Activated CD4-positive, alpha-beta memory T cell treated with anti-CD3 and anti-CD28 coated beads for 36 hours (primary cell): ENCODE measurements at regions of chr12 and their contacts with region 1.

Region 1: GRCh38 chr12:104286538-104287482 is 16.7 kb upstream of the EID3 start:
- DNase-seq: peak; percentile 94
- H3K4me3 Mint-ChIP-seq: peak overlapping the region; percentile 98
- H3K27ac Mint-ChIP-seq: peak overlapping the region; percentile 99
- H3K4me1 Mint-ChIP-seq: peaks cover 16% of the 10 kb centered on the region
- H3K27me3 Mint-ChIP-seq: no peaks in the 10 kb centered on the region

Region 2: GRCh38 chr12:103930034-103930786 is 356.6 kb before region 1 on chr12 and contains the start of gene HSP90B1:
- CTCF ChIA-PET with region 1: no interaction called
- POLR2A ChIA-PET with region 1: interaction called, 6 read pairs
- intact Hi-C with region 1: loop called (anchors 1 kb)
- DNase-seq: peak; percentile 100
- H3K4me3 Mint-ChIP-seq: peak within 1 kb of the TSS; percentile 86
- H3K27ac Mint-ChIP-seq: peak within 1 kb of the TSS; percentile 97
- H3K4me1 Mint-ChIP-seq: peaks cover 60% of the 10 kb centered on the region
- H3K27me3 Mint-ChIP-seq: no peaks in the 10 kb centered on the region
- total RNA-seq, gene HSP90B1: 452 to 453 TPM

Region 3: GRCh38 chr12:104064031-104064822 is 222.6 kb before region 1 on chr12 and contains the start of gene HCFC2:
- CTCF ChIA-PET with region 1: no interaction called
- POLR2A ChIA-PET with region 1: no interaction called
- intact Hi-C with region 1: loop called (anchors 1 kb)
- DNase-seq: peak; percentile 93
- H3K4me3 Mint-ChIP-seq: peak within 1 kb of the TSS; percentile 97
- H3K27ac Mint-ChIP-seq: peak within 1 kb of the TSS; percentile 81
- H3K4me1 Mint-ChIP-seq: peaks cover 21% of the 10 kb centered on the region
- H3K27me3 Mint-ChIP-seq: peaks cover 12% of the 10 kb centered on the region
- total RNA-seq, gene HCFC2: 8.9 to 10.8 TPM

Region 4: GRCh38 chr12:104094284-104094683 is 192.5 kb before region 1 on chr12:
- CTCF ChIA-PET with region 1: no interaction called
- POLR2A ChIA-PET with region 1: no interaction called
- intact Hi-C with region 1: no loop called
- DNase-seq: no peak
- H3K4me3 Mint-ChIP-seq: no peak overlapping the region
- H3K27ac Mint-ChIP-seq: no peak overlapping the region
- H3K4me1 Mint-ChIP-seq: peaks cover 16% of the 10 kb centered on the region
- H3K27me3 Mint-ChIP-seq: no peaks in the 10 kb centered on the region

Region 5: DNA sequence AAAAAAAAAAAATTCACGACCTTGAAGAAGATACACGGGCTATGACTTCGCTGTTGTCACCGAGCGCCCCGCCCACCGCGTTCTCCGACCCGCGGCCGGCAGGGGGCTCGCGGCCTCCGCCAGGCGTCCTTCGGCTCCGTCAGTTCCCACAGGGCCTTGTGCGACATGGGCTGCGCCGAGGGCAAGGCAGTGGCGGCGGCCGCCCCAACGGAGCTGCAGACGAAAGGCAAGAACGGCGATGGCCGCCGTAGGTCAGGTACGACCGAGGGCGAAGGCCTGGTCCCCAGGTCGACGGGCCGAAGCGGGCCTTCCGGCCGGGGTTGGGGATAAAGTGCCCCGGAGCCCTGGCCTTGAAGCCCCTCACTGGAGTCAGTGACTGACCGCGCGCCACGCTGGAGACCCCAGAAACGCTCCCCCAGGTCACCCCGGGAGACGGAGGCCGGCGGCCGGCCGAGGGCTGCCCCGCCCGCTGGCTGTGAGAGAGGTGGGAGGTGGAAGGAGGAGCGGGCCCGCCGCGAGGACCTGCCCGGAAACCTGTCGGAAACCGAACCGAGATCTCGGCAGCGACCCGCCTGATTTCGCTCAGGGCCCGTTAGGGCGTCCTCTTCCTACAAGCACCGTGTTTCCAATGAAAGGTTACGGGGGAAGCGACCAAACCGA is 71.0 kb before region 1 on chr12 and contains the start of gene TXNRD1:
- CTCF ChIA-PET with region 1: interaction called, 57 read pairs
- POLR2A ChIA-PET with region 1: interaction called, 42 read pairs
- intact Hi-C with region 1: loop called (anchors 1 kb)
- DNase-seq: peak; percentile 90
- H3K4me3 Mint-ChIP-seq: peak within 1 kb of the TSS; percentile 74
- H3K27ac Mint-ChIP-seq: peak within 1 kb of the TSS; percentile 9
- H3K4me1 Mint-ChIP-seq: peaks cover 38% of the 10 kb centered on the region
- H3K27me3 Mint-ChIP-seq: peaks cover 1% of the 10 kb centered on the region
- total RNA-seq, gene TXNRD1: 82.7 to 82.8 TPM

Region 6: GRCh38 chr12:104358347-104359003 is 71.7 kb after region 1 on chr12:
- CTCF ChIA-PET with region 1: interaction called, 11 read pairs
- POLR2A ChIA-PET with region 1: no interaction called
- intact Hi-C with region 1: no loop called
- DNase-seq: peak; percentile 79
- H3K4me3 Mint-ChIP-seq: no peak overlapping the region
- H3K27ac Mint-ChIP-seq: no peak overlapping the region
- H3K4me1 Mint-ChIP-seq: peaks cover 2% of the 10 kb centered on the region
- H3K27me3 Mint-ChIP-seq: no peaks in the 10 kb centered on the region

Region 7: GRCh38 chr12:104494137-104494792 is 207.5 kb after region 1 on chr12:
- CTCF ChIA-PET with region 1: no interaction called
- POLR2A ChIA-PET with region 1: no interaction called
- intact Hi-C with region 1: loop called (anchors 1 kb)
- DNase-seq: peak; percentile 89
- H3K4me3 Mint-ChIP-seq: peak overlapping the region; percentile 62
- H3K27ac Mint-ChIP-seq: peak overlapping the region; percentile 89
- H3K4me1 Mint-ChIP-seq: peaks cover 88% of the 10 kb centered on the region
- H3K27me3 Mint-ChIP-seq: no peaks in the 10 kb centered on the region